Gastrocnemius medialis (tissue), 4 donors: ENCODE measurements at regions of chr21 and their contacts with region 1.

Region 1: DNA sequence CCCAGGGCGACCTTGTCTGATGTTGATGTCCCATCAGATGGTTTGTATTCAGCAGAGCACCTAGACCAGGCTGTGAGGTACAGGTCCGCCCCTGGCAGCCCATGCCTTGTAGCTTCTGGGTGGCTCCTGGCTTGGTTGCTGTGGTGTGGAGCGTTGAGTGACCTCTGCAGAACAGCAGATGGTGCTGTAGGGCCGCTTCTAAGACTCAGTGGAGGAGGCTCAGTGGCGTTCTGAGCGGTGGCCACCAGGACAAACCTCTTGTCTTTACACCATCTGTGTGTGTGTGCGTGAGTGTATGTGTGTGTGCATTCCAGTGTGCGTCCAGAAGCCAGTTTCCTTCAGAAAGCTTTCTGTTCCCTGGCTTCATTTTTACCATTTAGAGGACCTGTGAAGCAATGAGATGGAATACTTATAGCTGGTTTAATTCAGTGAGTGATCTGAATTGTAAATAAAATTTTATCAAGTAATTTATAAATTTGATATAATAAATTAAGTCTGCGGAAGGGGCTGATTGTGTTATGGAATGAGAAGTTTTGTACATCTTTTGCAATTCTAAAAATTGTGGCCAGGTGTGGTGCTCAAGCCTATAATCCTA is 66.1 kb downstream of the ADARB1 start:
- DNase-seq: peak; percentile 67 to 80
- ATAC-seq: peak; percentile 61 to 73
- H3K4me3 ChIP-seq: no peak overlapping the region
- H3K27ac ChIP-seq: no peak overlapping the region
- H3K4me1 ChIP-seq: peaks cover 30 to 33% of the 10 kb centered on the region in 2 donors
- H3K27me3 ChIP-seq: no peaks in the 10 kb centered on the region
- CTCF ChIP-seq: peak; percentile 61 to 85 (median 74)
- POLR2A ChIP-seq: no peak

Region 2: GRCh38 chr21:44338971-44339910 is 801.2 kb before region 1 on chr21 and contains the start of gene CFAP410:
- in situ Hi-C with region 1: no loop called
- intact Hi-C with region 1: loop called (anchors 10 kb)
- DNase-seq: peak; percentile 88 to 93
- ATAC-seq: peak; percentile 90 to 92
- H3K4me3 ChIP-seq: peak within 1 kb of the TSS; percentile 80 to 96 (median 88)
- H3K27ac ChIP-seq: peak within 1 kb of the TSS; percentile 83 to 98 (median 96)
- H3K4me1 ChIP-seq: peaks cover 9 to 16% of the 10 kb centered on the region in 2 donors
- H3K27me3 ChIP-seq: no peaks in the 10 kb centered on the region
- CTCF ChIP-seq: peak in 1 of 5 experiments; percentile 31
- POLR2A ChIP-seq: peak; percentile 84 to 94
- total RNA-seq, gene CFAP410: 10.6 to 23.0 (median 20.0) TPM

Region 3: GRCh38 chr21:44873356-44874239 is 266.8 kb before region 1 on chr21 and contains the start of gene PTTG1IP:
- in situ Hi-C with region 1: no loop called
- intact Hi-C with region 1: loop called (anchors 2 kb)
- DNase-seq: peak; percentile 97 to 99
- ATAC-seq: peak; percentile 52 to 54
- H3K4me3 ChIP-seq: peak within 1 kb of the TSS; percentile 74 to 87 (median 82)
- H3K27ac ChIP-seq: peak within 1 kb of the TSS; percentile 95
- H3K4me1 ChIP-seq: peaks cover 58% of the 10 kb centered on the region in 2 donors
- H3K27me3 ChIP-seq: no peaks in the 10 kb centered on the region
- CTCF ChIP-seq: no peak
- POLR2A ChIP-seq: peak; percentile 95 to 96
- total RNA-seq, gene PTTG1IP: 116 to 217 (median 127) TPM

Region 4: DNA sequence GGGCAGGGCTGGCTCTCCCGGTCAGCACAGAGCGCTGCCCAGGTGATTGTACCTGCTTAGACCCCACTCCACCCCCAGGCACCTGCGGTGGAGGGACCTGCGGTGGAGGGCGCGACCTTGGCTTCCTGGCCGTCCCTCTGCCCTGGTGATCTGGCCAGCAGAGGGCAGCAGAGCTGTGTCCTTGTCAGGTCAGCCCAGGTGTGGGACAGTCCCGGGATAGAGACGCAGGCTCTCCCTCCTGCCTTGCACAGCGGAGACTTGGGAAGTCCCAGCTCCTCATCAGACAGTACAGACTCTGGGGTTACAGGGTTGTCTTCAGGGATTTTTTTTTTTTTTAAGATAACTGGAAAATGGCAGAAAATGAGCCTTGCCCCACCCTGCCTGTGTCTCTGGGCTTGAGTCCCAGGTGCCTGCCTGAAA is 190.7 kb before region 1 on chr21:
- in situ Hi-C with region 1: loop called in 2 of 4 experiments (anchors 5 kb)
- intact Hi-C with region 1: loop called (anchors 1 kb)
- DNase-seq: peak; percentile 82 to 94
- ATAC-seq: peak; percentile 40 to 53
- H3K4me3 ChIP-seq: no peak overlapping the region
- H3K27ac ChIP-seq: peak overlapping the region; percentile 47 to 96 (median 92)
- H3K4me1 ChIP-seq: peaks cover 63 to 64% of the 10 kb centered on the region in 2 donors
- H3K27me3 ChIP-seq: no peaks in the 10 kb centered on the region
- CTCF ChIP-seq: peak; percentile 90 to 98 (median 96)
- POLR2A ChIP-seq: peak in 1 of 2 donors; percentile 8

Region 5: DNA sequence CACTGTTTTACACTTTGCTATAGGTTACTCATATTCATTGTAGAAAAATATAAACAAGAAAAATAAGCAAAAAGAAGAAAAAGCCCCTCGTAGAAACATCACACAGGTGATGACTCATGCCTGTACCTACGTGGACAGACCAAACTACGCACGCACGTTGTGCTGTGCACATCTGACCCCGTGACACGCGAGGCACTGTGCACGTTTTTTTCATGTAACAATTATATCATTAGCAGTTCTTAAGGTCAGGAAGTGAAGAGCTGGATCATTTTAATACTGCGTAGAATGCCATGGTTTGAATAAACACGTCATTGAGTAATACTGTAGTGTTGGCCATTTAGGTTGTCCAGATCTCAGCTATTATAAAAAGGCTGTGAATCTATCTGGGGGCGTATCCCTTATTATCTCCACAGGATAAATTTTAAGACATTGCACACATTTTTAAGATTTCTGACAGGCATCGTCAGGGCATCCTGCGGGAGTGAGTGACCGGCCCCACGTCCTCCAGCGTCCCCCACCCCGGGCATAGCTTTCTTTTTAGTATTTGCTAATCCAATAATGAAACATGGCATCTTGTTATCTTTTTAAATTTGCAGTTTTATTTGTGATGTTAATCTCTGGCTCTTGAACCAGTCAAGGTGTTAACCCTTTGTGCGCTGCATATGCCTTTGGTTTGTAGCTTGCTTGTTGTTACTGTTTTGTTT is 89.5 kb before region 1 on chr21:
- in situ Hi-C with region 1: loop called in 2 of 4 experiments (anchors 10 kb)
- intact Hi-C with region 1: loop called (anchors 1 kb)
- DNase-seq: peak in 1 of 2 donors; percentile 84
- ATAC-seq: peak; percentile 28 to 49
- H3K4me3 ChIP-seq: peak overlapping the region in 1 of 4 donors; percentile 3
- H3K27ac ChIP-seq: peak overlapping the region; percentile 85 to 93 (median 92)
- H3K4me1 ChIP-seq: peaks cover 36 to 47% of the 10 kb centered on the region in 2 donors
- H3K27me3 ChIP-seq: no peaks in the 10 kb centered on the region
- CTCF ChIP-seq: no peak
- POLR2A ChIP-seq: no peak

Region 6: GRCh38 chr21:45439161-45439872 is 298.9 kb after region 1 on chr21:
- in situ Hi-C with region 1: loop called in 1 of 4 experiments (anchors 10 kb)
- intact Hi-C with region 1: loop called (anchors 1 kb)
- DNase-seq: peak; percentile 48 to 58
- ATAC-seq: peak; percentile 84 to 86
- H3K4me3 ChIP-seq: peak overlapping the region; percentile 46 to 60 (median 53)
- H3K27ac ChIP-seq: peak overlapping the region; percentile 58 to 74 (median 68)
- H3K4me1 ChIP-seq: peaks cover 6 to 10% of the 10 kb centered on the region in 2 donors
- H3K27me3 ChIP-seq: peaks cover 0 to 6% (median 0%) of the 10 kb centered on the region in 3 donors
- CTCF ChIP-seq: peak; percentile 93 to 98 (median 97)
- POLR2A ChIP-seq: no peak

Region 7: GRCh38 chr21:45643021-45643980 is 502.9 kb after region 1 on chr21 and contains the start of gene PCBP3:
- in situ Hi-C with region 1: no loop called
- intact Hi-C with region 1: no loop called
- DNase-seq: peak; percentile 70 to 76
- ATAC-seq: peak; percentile 82
- H3K4me3 ChIP-seq: peak within 1 kb of the TSS in 3 of 4 donors; percentile 6 to 29 (median 19)
- H3K27ac ChIP-seq: no peak within 1 kb of the TSS
- H3K4me1 ChIP-seq: peaks cover 0 to 5% of the 10 kb centered on the region in 2 donors
- H3K27me3 ChIP-seq: peaks cover 37 to 52% (median 50%) of the 10 kb centered on the region in 3 donors
- CTCF ChIP-seq: no peak
- POLR2A ChIP-seq: peak; percentile 14 to 28
- total RNA-seq, gene PCBP3: 0.13 to 0.26 TPM in 2 of 4 donors, not detected in the others